Activated T-helper 2 cell treated with anti-CD3 and anti-CD28 coated beads, Interferon-gamma antibody, Interleukin-2, Interleukin-4, amounts not matched to agents 10 μg/mL and 5 μg/mL and 100 μg/mL, durations not matched to agents 14 hours and 24 hours and 36 hours (primary cell): ENCODE measurements at regions of chr9 and their contacts with region 1.

Region 1: DNA sequence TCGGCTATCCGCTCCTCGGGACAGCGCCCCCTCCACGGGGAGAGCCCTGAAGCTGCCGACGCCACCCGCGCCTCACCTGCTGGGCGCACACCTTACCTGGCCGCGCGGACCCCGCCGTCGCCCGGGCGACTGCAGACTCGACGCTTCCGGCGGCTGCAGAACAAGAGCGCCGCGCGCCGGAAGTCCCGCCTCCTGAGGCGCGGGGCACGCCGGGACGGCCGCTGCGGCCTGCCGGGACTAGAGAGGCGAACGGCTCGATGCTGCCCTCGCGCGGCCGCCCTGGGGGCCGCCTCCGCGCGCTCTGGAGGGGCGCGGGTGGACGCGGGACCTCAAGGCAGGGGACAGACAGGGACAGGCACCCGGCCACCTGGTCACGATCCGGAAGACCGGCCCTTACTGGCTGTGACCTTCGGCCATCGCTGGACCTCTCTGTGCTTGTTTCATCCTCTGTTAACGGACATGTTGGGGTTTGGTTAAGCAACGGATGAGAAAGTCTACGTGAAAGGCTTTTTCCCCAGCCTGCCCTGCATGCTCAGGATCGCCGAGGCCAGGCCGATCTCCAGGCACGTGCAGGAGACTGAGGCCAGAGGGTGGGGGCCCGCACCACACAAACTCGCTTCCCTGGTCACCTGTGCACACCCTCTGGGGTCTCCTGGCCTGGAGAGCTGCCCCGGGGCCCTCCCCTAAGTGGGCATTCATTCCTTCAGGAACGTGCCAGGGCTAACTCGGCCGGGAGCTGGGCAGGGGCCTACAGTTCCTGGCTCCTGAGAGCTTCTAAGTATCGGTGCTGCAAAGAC is at the start of gene SNAPC4:
- DNase-seq: peak; percentile 84
- H3K4me3 Mint-ChIP-seq: peak within 1 kb of the TSS; percentile 84
- H3K27ac Mint-ChIP-seq: peak within 1 kb of the TSS; percentile 64
- H3K4me1 Mint-ChIP-seq: peaks cover 34% of the 10 kb centered on the region
- H3K27me3 Mint-ChIP-seq: no peaks in the 10 kb centered on the region
- total RNA-seq, gene SNAPC4: 22.7 and 22.9 TPM in 2 replicates

Region 2: GRCh38 chr9:136327313-136327974 is 72.8 kb before region 1 on chr9 and contains the start of gene GPSM1:
- intact Hi-C with region 1: loop called (anchors 10 kb)
- DNase-seq: peak; percentile 47
- H3K4me3 Mint-ChIP-seq: peak within 1 kb of the TSS; percentile 69
- H3K27ac Mint-ChIP-seq: peak within 1 kb of the TSS; percentile 55
- H3K4me1 Mint-ChIP-seq: peaks cover 5% of the 10 kb centered on the region
- H3K27me3 Mint-ChIP-seq: no peaks in the 10 kb centered on the region
- total RNA-seq, gene GPSM1: 24.5 and 25.8 TPM in 2 replicates

Region 3: GRCh38 chr9:136385015-136385414 is 15.2 kb before region 1 on chr9:
- intact Hi-C with region 1: loop called (anchors 2 kb)
- DNase-seq: peak; percentile 57
- H3K4me3 Mint-ChIP-seq: no peak overlapping the region
- H3K27ac Mint-ChIP-seq: peak overlapping the region; percentile 55
- H3K4me1 Mint-ChIP-seq: peaks cover 19% of the 10 kb centered on the region
- H3K27me3 Mint-ChIP-seq: no peaks in the 10 kb centered on the region

Region 4: GRCh38 chr9:136439550-136440408 is 39.5 kb after region 1 on chr9 and contains the start of gene INPP5E:
- intact Hi-C with region 1: loop called (anchors 2 kb)
- DNase-seq: peak; percentile 84
- H3K4me3 Mint-ChIP-seq: peak within 1 kb of the TSS; percentile 83
- H3K27ac Mint-ChIP-seq: no peak within 1 kb of the TSS
- H3K4me1 Mint-ChIP-seq: peaks cover 19% of the 10 kb centered on the region
- H3K27me3 Mint-ChIP-seq: no peaks in the 10 kb centered on the region
- total RNA-seq, gene INPP5E: 20.8 and 21.8 TPM in 2 replicates

Region 5: DNA sequence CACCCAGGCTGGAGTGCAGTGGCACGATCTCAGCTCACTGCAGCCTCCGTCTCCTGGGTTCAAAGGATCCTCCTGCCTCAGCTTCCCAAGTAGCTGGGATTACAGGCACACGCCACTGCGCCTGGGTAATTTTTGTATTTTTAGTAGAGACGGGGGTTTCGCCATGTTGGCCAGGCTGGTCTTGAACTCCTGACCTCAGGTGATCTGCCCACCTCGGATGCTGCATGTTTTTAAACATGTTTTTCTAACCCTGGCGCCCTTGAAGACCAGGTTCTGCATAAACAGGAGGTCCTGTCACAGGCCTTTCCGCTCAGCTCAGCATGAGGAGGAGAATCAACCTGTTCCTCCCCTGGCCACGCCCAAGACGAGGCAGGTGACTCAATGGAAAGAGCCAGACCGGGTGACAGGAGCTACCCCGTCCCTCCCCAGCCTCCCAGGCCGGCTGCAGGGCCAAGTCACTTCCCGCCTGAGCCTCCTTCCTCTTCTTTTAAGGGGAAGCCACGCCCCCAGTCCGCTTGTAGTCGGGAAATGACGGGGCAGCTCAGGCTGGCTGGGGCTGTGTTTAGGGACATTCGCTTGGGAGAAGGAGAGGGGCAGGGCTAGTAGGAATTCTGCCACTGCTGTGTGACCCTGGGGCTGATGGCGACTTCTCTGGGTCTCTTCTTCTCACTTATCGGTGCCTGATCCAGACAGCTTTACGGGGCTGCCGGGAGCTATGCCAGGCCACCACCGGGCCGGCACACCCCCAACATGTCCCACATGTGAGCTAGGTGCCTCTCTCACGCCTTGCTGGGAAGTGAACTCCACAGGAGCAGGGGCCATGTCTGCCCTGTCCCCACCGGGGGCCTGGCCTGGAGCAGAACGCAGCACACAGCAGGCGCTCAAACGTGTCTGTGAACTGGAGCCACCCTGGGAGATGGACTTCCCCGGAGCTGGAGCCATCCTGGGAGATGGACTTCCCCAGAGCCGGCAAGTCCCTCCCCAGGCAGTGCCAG is 139.5 kb after region 1 on chr9:
- intact Hi-C with region 1: loop called (anchors 10 kb)
- DNase-seq: peak; percentile 92
- H3K4me3 Mint-ChIP-seq: peak overlapping the region; percentile 89
- H3K27ac Mint-ChIP-seq: peak overlapping the region; percentile 100
- H3K4me1 Mint-ChIP-seq: peaks cover 37% of the 10 kb centered on the region
- H3K27me3 Mint-ChIP-seq: no peaks in the 10 kb centered on the region